PC-9 (cell line): ENCODE measurements at regions of chr5 and their contacts with region 1.

Region 1: DNA sequence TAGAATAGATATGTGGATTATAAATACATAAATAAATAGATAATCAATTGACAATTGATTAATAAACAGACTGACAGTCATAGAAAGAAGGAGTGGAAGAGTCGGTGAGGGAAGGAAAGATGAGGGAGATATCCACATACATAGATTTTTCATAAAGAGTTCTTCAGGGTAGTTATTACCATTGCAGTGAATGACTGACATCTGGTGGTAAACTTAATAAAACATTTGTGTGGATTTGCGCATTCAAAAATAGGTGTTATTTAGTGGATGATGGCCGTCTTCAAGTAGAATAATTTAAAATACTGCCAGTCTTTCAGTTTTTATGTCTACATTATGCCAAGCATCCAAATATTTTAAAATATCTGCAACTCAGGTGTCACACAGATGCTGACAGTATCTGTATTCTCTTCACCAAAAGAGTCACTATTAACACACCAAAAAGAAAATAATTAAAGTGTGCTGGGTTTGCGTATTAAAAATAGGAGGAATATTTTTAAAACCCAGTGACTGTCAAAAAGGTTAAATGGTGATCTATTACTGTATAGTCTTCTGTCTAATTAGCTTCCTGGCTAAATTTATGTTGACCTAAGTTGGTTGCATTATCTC is 78.8 kb downstream of the GIN1 start:
- DNase-seq: peak in 1 of 2 experiments; percentile 57
- H3K4me3 ChIP-seq: no peak overlapping the region
- H3K27ac ChIP-seq: no peak overlapping the region
- H3K4me1 ChIP-seq: 0 out of 2 replicates have a peak, but pooled peaks cover 6% of the 10 kb centered on the region
- H3K27me3 ChIP-seq: no peaks in the 10 kb centered on the region
- CTCF ChIP-seq: peak; percentile 64

Region 2: GRCh38 chr5:102536323-102536928 is 504.7 kb before region 1 on chr5:
- CTCF ChIA-PET with region 1: interaction called, 3 read pairs
- POLR2A ChIA-PET with region 1: no interaction called
- intact Hi-C with region 1: loop called (anchors 2 kb)
- DNase-seq: no peak
- H3K4me3 ChIP-seq: no peak overlapping the region
- H3K27ac ChIP-seq: no peak overlapping the region
- H3K4me1 ChIP-seq: no peaks in the 10 kb centered on the region
- H3K27me3 ChIP-seq: no peaks in the 10 kb centered on the region
- CTCF ChIP-seq: peak; percentile 70

Region 3: DNA sequence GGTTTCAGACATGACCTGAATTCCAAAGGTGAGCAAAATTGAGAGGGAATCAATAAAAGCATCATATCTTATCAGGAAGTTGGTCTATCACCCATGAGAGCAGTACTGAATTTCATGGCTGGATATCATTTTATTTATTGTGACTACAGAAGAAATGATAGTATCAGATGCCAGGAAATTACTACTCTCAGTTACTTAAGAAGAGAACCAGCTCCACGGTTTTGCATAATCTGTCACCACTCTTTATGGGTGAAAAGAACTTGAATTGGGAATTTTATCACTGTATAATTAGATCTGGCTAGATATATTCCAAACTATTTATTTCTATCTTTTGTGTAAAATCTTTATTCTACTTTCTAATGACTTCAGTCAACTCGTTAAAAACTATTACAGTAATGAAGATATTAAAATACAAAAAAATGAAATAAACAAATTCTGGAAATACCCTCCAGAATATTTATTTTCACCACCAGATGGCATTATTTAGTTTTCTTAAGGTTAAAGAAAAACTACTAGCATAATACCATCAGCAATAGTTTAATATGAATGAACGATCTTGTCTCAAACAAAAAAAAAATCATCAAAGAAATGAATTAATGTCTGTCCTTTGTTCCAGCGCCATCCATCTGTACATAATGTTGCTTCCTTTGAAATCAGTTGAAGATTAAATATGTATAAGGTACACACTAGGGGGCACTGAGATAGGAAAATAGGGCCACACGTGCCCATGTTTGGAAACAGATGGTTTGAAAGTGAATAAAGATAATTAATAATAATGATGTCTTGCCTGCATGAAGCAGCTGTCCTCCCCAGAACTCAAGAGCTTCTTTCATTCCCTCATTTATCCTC is 457.7 kb before region 1 on chr5:
- CTCF ChIA-PET with region 1: no interaction called
- POLR2A ChIA-PET with region 1: interaction called, 3 read pairs
- intact Hi-C with region 1: loop called (anchors 2 kb)
- DNase-seq: no peak
- H3K4me3 ChIP-seq: no peak overlapping the region
- H3K27ac ChIP-seq: no peak overlapping the region
- H3K4me1 ChIP-seq: no peaks in the 10 kb centered on the region
- H3K27me3 ChIP-seq: no peaks in the 10 kb centered on the region
- CTCF ChIP-seq: peak; percentile 74

Region 4: GRCh38 chr5:102782311-102782770 is 258.8 kb before region 1 on chr5:
- CTCF ChIA-PET with region 1: no interaction called
- POLR2A ChIA-PET with region 1: no interaction called
- intact Hi-C with region 1: loop called (anchors 2 kb)
- DNase-seq: no peak
- H3K4me3 ChIP-seq: no peak overlapping the region
- H3K27ac ChIP-seq: no peak overlapping the region
- H3K4me1 ChIP-seq: peaks cover 5% of the 10 kb centered on the region; the same call in 1 of the 2 replicates
- H3K27me3 ChIP-seq: no peaks in the 10 kb centered on the region
- CTCF ChIP-seq: no peak

Region 5: DNA sequence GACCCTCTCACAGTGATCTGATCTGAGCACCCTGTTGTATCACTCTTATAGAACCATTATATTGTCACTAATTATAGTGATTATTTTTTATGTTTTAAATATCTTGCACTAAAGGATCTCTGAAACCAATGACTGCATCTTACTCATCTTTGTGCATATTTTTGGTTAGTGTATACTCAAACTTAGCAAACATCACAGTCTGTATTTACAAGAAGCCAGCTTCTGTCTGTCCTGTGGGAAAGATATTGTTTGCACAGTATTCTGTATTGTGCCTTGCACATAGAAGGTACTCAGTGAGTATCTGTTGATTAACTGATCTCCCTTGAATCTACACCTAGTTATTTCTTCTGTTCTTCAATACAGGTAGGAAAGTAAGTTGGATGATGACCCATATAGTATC is 154.6 kb before region 1 on chr5:
- CTCF ChIA-PET with region 1: no interaction called
- POLR2A ChIA-PET with region 1: no interaction called
- intact Hi-C with region 1: no loop called
- DNase-seq: no peak
- H3K4me3 ChIP-seq: no peak overlapping the region
- H3K27ac ChIP-seq: no peak overlapping the region
- H3K4me1 ChIP-seq: no peaks in the 10 kb centered on the region
- H3K27me3 ChIP-seq: no peaks in the 10 kb centered on the region
- CTCF ChIP-seq: no peak

Region 6: GRCh38 chr5:103224118-103224893 is 183.1 kb after region 1 on chr5:
- CTCF ChIA-PET with region 1: no interaction called
- POLR2A ChIA-PET with region 1: no interaction called
- intact Hi-C with region 1: loop called (anchors 10 kb)
- DNase-seq: peak; percentile 27 to 54
- H3K4me3 ChIP-seq: no peak overlapping the region
- H3K27ac ChIP-seq: no peak overlapping the region
- H3K4me1 ChIP-seq: no peaks in the 10 kb centered on the region
- H3K27me3 ChIP-seq: no peaks in the 10 kb centered on the region
- CTCF ChIP-seq: peak; percentile 83